H1 (cell line): ENCODE measurements at regions of chr2 and their contacts with region 1.

Region 1: GRCh38 chr2:101361121-101361870 is 26.0 kb downstream of the CREG2 start:
- DNase-seq: no peak
- H3K4me3 ChIP-seq: no peak overlapping the region
- H3K27ac ChIP-seq: no peak overlapping the region
- H3K4me1 ChIP-seq: peaks cover 2 to 7% (median 2%) of the 10 kb centered on the region in 4 experiments; a peak in 5 of 7 replicates
- H3K27me3 ChIP-seq: no peaks in the 10 kb centered on the region
- CTCF ChIP-seq: no peak
- EP300 ChIP-seq: no peak
- POLR2A ChIP-seq: no peak
- RAD21 ChIP-seq: no peak

Region 2: GRCh38 chr2:101308432-101309210 is 52.7 kb before region 1 on chr2 and contains the start of gene RNF149:
- CTCF ChIA-PET with region 1: no interaction called
- POLR2A ChIA-PET with region 1: no interaction called
- DNase-seq: peak; percentile 65 to 95
- H3K4me3 ChIP-seq: peak within 1 kb of the TSS; percentile 56 to 80 (median 72)
- H3K27ac ChIP-seq: no peak within 1 kb of the TSS
- H3K4me1 ChIP-seq: peaks cover 3 to 14% (median 5%) of the 10 kb centered on the region in 4 experiments
- H3K27me3 ChIP-seq: peaks cover 0 to 9% (median 0%) of the 10 kb centered on the region in 4 experiments; a peak in 3 of 7 replicates
- CTCF ChIP-seq: no peak
- EP300 ChIP-seq: no peak
- POLR2A ChIP-seq: peak in 1 of 2 experiments; percentile 63; a peak in 2 of 3 replicates
- RAD21 ChIP-seq: peak in 1 of 2 experiments; percentile 1; a peak in 1 of 4 replicates
- total RNA-seq, gene RNF149: 21.9 and 28.2 TPM in 2 replicates

Region 3: DNA sequence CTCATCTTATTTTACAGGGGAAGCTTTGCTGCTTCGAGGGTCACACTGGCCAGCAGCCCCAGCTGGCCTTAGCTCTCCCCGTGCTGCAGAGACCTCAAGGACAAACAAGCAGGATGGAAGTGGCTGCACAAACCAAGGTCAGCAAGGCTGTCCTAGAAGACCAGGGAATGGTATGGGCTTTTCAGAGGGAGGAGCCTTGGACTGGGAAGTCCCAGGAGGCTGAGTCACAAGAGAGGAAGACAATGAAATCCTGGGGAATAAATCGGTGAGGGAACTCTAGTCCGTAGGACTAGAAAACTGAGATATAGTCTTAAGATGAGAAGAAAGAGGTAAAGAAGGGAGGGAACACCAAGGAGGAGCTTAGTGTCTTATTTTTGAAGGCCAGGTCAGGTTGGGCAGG is 10.3 kb after region 1 on chr2:
- CTCF ChIA-PET with region 1: interaction called, 10 read pairs
- POLR2A ChIA-PET with region 1: no interaction called
- DNase-seq: no peak
- H3K4me3 ChIP-seq: no peak overlapping the region
- H3K27ac ChIP-seq: no peak overlapping the region
- H3K4me1 ChIP-seq: no peaks in the 10 kb centered on the region; a peak in 1 of 7 replicates
- H3K27me3 ChIP-seq: no peaks in the 10 kb centered on the region
- CTCF ChIP-seq: no peak
- EP300 ChIP-seq: no peak
- POLR2A ChIP-seq: no peak
- RAD21 ChIP-seq: no peak

Region 4: DNA sequence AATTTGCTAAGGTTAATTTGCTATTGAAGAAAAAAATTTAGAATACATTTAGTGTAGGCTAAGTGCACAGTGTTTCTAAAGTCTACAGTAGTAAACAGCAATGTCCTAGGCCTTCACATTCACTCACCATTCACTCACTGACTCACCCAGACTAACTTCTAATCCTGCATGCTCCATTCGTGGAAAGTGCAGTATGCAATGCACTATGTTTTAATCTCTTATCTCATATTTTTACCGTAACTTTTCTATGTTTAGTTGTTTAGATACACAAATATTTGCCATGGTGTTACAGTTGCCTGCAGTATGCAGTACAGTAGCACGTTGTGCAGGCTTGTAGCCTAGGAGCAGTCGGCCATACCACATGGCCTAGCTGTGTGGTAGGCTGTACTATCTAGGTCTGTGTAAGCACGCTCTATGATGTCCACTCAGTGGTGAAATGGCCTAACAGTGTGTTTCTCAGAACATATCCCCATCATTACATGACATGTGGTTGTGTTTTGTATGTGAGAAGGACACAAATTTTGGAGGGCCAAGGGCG is 131.7 kb after region 1 on chr2:
- CTCF ChIA-PET with region 1: no interaction called
- POLR2A ChIA-PET with region 1: no interaction called
- DNase-seq: no peak
- H3K4me3 ChIP-seq: no peak overlapping the region
- H3K27ac ChIP-seq: no peak overlapping the region
- H3K4me1 ChIP-seq: no peaks in the 10 kb centered on the region
- H3K27me3 ChIP-seq: no peaks in the 10 kb centered on the region
- CTCF ChIP-seq: no peak
- EP300 ChIP-seq: no peak
- POLR2A ChIP-seq: no peak
- RAD21 ChIP-seq: no peak